A549 (cell line): ENCODE measurements at regions of chr11 and their contacts with region 1.

Region 1: GRCh38 chr11:90204832-90205646 is 17.8 kb downstream of the CHORDC1 start:
- DNase-seq: peak; percentile 32 to 69
- ATAC-seq: peak; percentile 79 to 80; a peak in 4 of 6 replicates
- H3K4me3 ChIP-seq: no peak overlapping the region
- H3K27ac ChIP-seq: no peak overlapping the region
- H3K4me1 ChIP-seq: peaks cover 10% of the 10 kb centered on the region
- CTCF ChIP-seq: peak; percentile 77
- EP300 ChIP-seq: no peak
- POLR2A ChIP-seq: no peak
- RAD21 ChIP-seq: peak; percentile 34 to 46; a peak in 4 of 5 replicates

Region 2: GRCh38 chr11:90148900-90149299 is 56.1 kb before region 1 on chr11:
- CTCF ChIA-PET with region 1: no interaction called
- POLR2A ChIA-PET with region 1: no interaction called
- DNase-seq: no peak
- ATAC-seq: no peak
- H3K4me3 ChIP-seq: no peak overlapping the region
- H3K27ac ChIP-seq: no peak overlapping the region
- H3K4me1 ChIP-seq: no peaks in the 10 kb centered on the region
- CTCF ChIP-seq: no peak
- EP300 ChIP-seq: no peak
- POLR2A ChIP-seq: no peak
- RAD21 ChIP-seq: no peak

Region 3: GRCh38 chr11:90178760-90179159 is 26.3 kb before region 1 on chr11:
- CTCF ChIA-PET with region 1: no interaction called
- POLR2A ChIA-PET with region 1: no interaction called
- DNase-seq: no peak
- ATAC-seq: no peak
- H3K4me3 ChIP-seq: no peak overlapping the region
- H3K27ac ChIP-seq: no peak overlapping the region
- H3K4me1 ChIP-seq: no peaks in the 10 kb centered on the region
- CTCF ChIP-seq: no peak
- EP300 ChIP-seq: no peak
- POLR2A ChIP-seq: no peak
- RAD21 ChIP-seq: no peak

Region 4: DNA sequence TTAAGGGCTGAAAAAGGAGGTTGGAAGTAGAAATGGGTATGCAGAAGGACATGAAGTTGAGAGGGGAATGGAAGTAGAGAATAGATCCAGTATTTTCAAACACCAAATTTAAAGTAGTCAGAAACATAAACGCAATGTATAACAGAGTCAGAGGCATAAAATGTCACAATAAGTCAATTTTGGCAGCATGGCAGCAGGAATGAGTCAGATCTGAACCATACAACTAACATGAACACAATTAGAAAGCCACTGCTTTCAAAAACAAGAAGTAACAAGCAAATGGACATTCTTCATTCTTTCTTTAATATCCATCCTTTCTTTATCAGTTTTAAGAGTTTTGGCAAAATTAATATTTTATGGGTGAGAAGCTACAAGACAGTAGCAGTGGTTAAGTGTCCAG is 15.4 kb after region 1 on chr11:
- CTCF ChIA-PET with region 1: interaction called, 14 read pairs
- POLR2A ChIA-PET with region 1: interaction called, 3 read pairs
- DNase-seq: peak in 1 of 2 experiments; percentile 7
- ATAC-seq: no peak
- H3K4me3 ChIP-seq: peak overlapping the region; percentile 94
- H3K27ac ChIP-seq: no peak overlapping the region
- H3K4me1 ChIP-seq: peaks cover 47% of the 10 kb centered on the region
- CTCF ChIP-seq: no peak
- EP300 ChIP-seq: no peak
- POLR2A ChIP-seq: no peak
- RAD21 ChIP-seq: no peak